Naive thymus-derived CD4-positive, alpha-beta T cell (primary cell): ENCODE measurements at regions of chr15 and their contacts with region 1.

Region 1: GRCh38 chr15:55267401-55268175 is 22.0 kb downstream of the RAB27A start:
- DNase-seq: peak; percentile 42 to 75 (median 68)
- ATAC-seq: peak; percentile 96
- H3K4me3 ChIP-seq: peak overlapping the region; percentile 52
- H3K4me3 Mint-ChIP-seq: peak overlapping the region; percentile 71 to 85 (median 79)
- H3K27ac ChIP-seq: peak overlapping the region; percentile 70
- H3K27ac Mint-ChIP-seq: peak overlapping the region; percentile 85 to 97 (median 92)
- H3K4me1 ChIP-seq: peaks cover 19 to 71% of the 10 kb centered on the region in 2 donors
- H3K4me1 Mint-ChIP-seq: peaks cover 33 to 58% (median 45%) of the 10 kb centered on the region in 7 donors
- H3K27me3 ChIP-seq: no peaks in the 10 kb centered on the region
- H3K27me3 Mint-ChIP-seq: no peaks in the 10 kb centered on the region

Region 2: GRCh38 chr15:55250392-55250791 is 17.2 kb before region 1 on chr15:
- CTCF ChIA-PET with region 1: interaction called, 4 read pairs
- POLR2A ChIA-PET with region 1: interaction called, 15 read pairs
- intact Hi-C with region 1: loop called (anchors 1 to 2 kb)
- DNase-seq: no peak
- ATAC-seq: peak; percentile 58
- H3K4me3 ChIP-seq: no peak overlapping the region
- H3K4me3 Mint-ChIP-seq: peak overlapping the region in 8 of 10 donors; percentile 17 to 53 (median 37)
- H3K27ac ChIP-seq: no peak overlapping the region
- H3K27ac Mint-ChIP-seq: peak overlapping the region; percentile 4 to 80 (median 56)
- H3K4me1 ChIP-seq: peaks cover 33 to 63% of the 10 kb centered on the region in 2 donors
- H3K4me1 Mint-ChIP-seq: peaks cover 38 to 62% (median 49%) of the 10 kb centered on the region in 7 donors
- H3K27me3 ChIP-seq: no peaks in the 10 kb centered on the region
- H3K27me3 Mint-ChIP-seq: no peaks in the 10 kb centered on the region

Region 3: GRCh38 chr15:55255714-55256113 is 11.9 kb before region 1 on chr15:
- CTCF ChIA-PET with region 1: interaction called, 4 read pairs
- POLR2A ChIA-PET with region 1: interaction called, 15 read pairs
- intact Hi-C with region 1: loop called (anchors 1 kb)
- DNase-seq: peak in 2 of 9 donors; percentile 13 to 31
- ATAC-seq: peak; percentile 64
- H3K4me3 ChIP-seq: peak overlapping the region; percentile 56
- H3K4me3 Mint-ChIP-seq: peak overlapping the region; percentile 71 to 86 (median 84)
- H3K27ac ChIP-seq: peak overlapping the region; percentile 54
- H3K27ac Mint-ChIP-seq: peak overlapping the region; percentile 80 to 96 (median 89)
- H3K4me1 ChIP-seq: peaks cover 40 to 62% of the 10 kb centered on the region in 2 donors
- H3K4me1 Mint-ChIP-seq: peaks cover 45 to 67% (median 63%) of the 10 kb centered on the region in 7 donors
- H3K27me3 ChIP-seq: no peaks in the 10 kb centered on the region
- H3K27me3 Mint-ChIP-seq: no peaks in the 10 kb centered on the region

Region 4: DNA sequence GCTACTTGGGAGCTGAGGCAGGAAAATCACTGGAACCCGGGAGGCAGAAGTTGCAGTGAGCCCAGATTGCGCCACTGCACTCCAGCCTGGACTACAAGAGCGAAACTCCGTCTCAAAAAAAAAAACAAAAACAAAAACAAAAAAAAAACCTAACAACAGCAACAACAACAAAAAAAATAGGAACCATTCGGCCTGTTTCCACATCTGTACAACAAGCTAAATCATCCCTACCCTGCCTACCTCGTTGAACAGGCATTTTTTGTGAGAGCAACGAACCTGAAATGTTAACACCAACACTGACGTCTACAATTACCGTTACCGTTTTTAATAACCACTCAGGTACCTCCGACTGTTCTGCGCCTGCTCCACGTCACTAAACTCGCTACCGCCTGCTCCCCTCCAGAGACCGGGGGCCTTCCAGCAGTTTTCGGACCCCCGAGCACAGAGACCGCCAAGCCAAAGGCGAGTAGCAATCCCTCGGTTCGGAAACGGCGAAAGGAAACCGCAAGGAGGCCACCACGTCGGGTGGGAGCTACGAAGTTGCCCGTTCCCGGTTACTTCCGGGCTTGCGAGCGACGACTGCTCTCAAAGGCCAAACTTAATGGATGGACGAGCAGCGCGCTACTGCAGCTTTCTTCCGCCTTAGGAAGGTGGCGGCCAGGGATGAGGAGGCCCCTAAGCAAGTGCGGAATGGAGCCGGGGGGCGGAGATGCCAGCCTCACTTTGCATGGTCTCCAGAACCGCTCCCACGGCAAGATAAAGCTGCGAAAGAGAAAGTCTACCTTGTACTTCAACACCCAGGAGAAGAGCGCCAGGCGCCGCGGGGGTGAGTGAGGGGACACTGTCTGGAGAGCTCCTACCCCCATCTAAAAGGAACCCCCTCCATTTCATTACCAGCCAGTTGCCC is 51.3 kb after region 1 on chr15 and contains the starts of genes PIGB and PIGBOS1:
- CTCF ChIA-PET with region 1: no interaction called
- POLR2A ChIA-PET with region 1: interaction called, 16 read pairs
- intact Hi-C with region 1: no loop called
- DNase-seq: peak; percentile 73 to 88 (median 84)
- ATAC-seq: peak; percentile 91
- H3K4me3 ChIP-seq: peak within 1 kb of the TSS; percentile 95
- H3K4me3 Mint-ChIP-seq: peak within 1 kb of the TSS; percentile 98 to 99 (median 98)
- H3K27ac ChIP-seq: peak within 1 kb of the TSS; percentile 98
- H3K27ac Mint-ChIP-seq: peak within 1 kb of the TSS; percentile 99 to 100 (median 100)
- H3K4me1 ChIP-seq: peaks cover 5 to 28% of the 10 kb centered on the region in 2 donors
- H3K4me1 Mint-ChIP-seq: peaks cover 41 to 86% (median 76%) of the 10 kb centered on the region in 7 donors
- H3K27me3 ChIP-seq: no peaks in the 10 kb centered on the region
- H3K27me3 Mint-ChIP-seq: no peaks in the 10 kb centered on the region
- total RNA-seq, gene PIGB: 21.4 to 30.2 (median 24.3) TPM
- total RNA-seq, gene PIGBOS1: 8.8 to 21.3 (median 12.5) TPM